GM10248 (cell line): ENCODE measurements at regions of chr5 and their contacts with region 1.

Region 1: DNA sequence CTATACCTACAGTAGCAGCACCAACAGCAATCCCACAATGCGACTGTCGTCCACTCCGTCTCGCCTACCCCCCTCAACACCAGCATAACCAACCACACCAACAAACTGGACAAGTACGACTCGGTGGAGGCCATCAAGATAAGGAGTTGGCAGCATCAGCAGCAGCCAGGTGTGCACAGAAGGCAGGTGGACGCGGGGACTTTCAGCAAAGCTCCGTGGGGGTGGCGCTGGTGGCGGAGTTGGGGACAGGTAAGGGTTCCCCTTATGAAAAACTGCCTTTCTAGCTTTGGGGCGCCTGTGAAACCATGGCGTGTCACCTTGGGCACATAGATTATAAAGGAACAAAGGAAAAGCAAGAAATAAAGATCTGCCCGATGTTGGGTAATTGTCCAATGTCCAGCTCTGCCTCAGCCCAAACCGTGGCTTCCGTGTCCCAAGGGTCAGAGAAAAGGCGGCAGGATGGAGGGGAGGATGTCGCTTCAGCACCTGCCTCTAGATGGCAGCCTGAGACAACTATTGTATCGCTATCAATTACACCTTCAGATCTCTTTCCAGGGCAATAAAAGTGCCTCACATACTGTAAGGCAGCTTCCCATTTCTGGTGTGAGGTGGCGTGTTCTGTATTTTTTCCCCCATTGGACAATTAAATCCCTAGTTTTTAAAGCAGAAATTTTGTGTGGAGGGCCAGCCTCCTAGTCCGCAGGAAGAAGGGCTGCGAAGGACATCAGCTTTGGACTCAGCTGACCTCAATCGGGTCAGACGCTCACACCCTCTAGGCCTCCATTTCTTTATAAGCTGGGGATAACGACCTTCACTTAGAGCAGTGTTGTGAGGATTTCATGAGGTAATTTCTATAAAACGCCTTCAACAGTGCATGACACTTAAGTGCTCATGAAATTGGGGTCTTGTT is 58.8 kb downstream of the MTRR start:
- DNase-seq: peak; percentile 77
- CTCF ChIP-seq: peak; percentile 79

Region 2: GRCh38 chr5:7910738-7911428 is 16.8 kb before region 1 on chr5:
- CTCF ChIA-PET with region 1: interaction called, 12 read pairs
- POLR2A ChIA-PET with region 1: no interaction called
- DNase-seq: no peak
- CTCF ChIP-seq: no peak

Region 3: GRCh38 chr5:7941692-7942091 is 14.0 kb after region 1 on chr5:
- CTCF ChIA-PET with region 1: interaction called, 43 read pairs
- POLR2A ChIA-PET with region 1: no interaction called
- DNase-seq: no peak
- CTCF ChIP-seq: no peak